Upper lobe of right lung (tissue), 1 donor: ENCODE measurements at regions of chrX and their contacts with region 1.

Region 1: DNA sequence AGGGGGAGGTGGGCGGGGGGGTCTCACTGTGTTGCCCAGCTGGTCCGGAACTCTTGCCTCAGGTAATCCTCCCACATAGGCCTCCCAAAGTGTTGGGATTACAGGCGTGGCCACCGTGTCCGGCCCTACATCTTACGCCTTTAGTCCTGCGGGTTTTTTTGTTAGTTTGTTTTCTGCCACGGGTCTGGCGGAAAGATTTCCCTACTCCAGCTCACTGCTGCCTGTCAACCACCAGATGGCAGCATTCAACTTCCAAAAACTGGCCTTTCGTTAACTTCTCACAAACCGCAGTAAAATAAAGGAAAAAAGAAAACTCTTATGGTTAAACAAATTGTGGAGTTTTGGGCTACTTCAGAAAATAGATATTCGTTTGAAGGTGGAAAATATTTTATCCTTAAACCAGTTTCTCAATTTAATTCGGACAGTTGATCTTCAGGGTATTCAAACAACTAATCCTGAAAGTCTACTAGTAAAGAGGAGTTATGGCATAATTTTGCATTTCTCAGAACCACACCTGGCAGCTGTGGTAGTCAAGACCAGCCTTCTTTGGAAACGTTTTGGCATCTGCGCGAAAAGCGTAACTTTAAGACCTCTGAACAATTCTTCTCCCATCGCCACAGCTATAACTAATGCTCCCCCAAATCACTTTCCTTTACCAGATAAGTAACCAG is 41.1 kb downstream of the LUZP4 start:
- DNase-seq: no peak
- ATAC-seq: peak; percentile 74
- H3K4me3 ChIP-seq: no peak overlapping the region
- H3K27ac ChIP-seq: no peak overlapping the region
- H3K4me1 ChIP-seq: no peaks in the 10 kb centered on the region
- H3K27me3 ChIP-seq: no peaks in the 10 kb centered on the region
- CTCF ChIP-seq: peak; percentile 70

Region 2: DNA sequence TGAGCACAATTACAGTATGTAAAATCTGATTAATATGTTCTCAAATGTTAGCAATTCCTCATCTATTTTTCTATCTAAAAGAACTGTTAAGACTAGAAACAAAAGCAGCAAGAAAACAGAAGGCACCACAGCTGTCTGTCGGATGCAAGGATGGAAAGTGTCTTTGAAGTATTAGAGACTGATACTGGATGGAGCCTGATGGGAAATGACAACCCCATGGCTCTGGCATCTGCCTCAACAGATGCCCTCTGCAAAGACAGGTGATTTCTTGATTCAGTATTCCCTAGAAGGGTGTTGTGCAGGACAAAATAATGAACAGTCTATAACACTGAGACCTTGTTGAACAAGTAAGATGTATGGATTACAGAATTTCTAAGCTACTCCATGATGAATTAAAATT is 116.5 kb before region 1 on chrX:
- intact Hi-C with region 1: no loop called
- DNase-seq: no peak
- ATAC-seq: no peak
- H3K4me3 ChIP-seq: no peak overlapping the region
- H3K27ac ChIP-seq: no peak overlapping the region
- H3K4me1 ChIP-seq: no peaks in the 10 kb centered on the region
- H3K27me3 ChIP-seq: no peaks in the 10 kb centered on the region
- CTCF ChIP-seq: no peak

Region 3: GRCh38 chrX:115400960-115401359 is 70.3 kb after region 1 on chrX:
- intact Hi-C with region 1: no loop called
- DNase-seq: no peak
- ATAC-seq: no peak
- H3K4me3 ChIP-seq: no peak overlapping the region
- H3K27ac ChIP-seq: no peak overlapping the region
- H3K4me1 ChIP-seq: no peaks in the 10 kb centered on the region
- H3K27me3 ChIP-seq: no peaks in the 10 kb centered on the region
- CTCF ChIP-seq: no peak

Region 4: GRCh38 chrX:115642895-115643530 is 312.4 kb after region 1 on chrX:
- intact Hi-C with region 1: loop called (anchors 5 kb)
- DNase-seq: no peak
- ATAC-seq: peak; percentile 71
- H3K4me3 ChIP-seq: no peak overlapping the region
- H3K27ac ChIP-seq: no peak overlapping the region
- H3K4me1 ChIP-seq: peaks cover 4% of the 10 kb centered on the region
- H3K27me3 ChIP-seq: no peaks in the 10 kb centered on the region
- CTCF ChIP-seq: peak; percentile 85